Ascending aorta (tissue), 2 donors: ENCODE measurements at regions of chr2 and their contacts with region 1.

Region 1: DNA sequence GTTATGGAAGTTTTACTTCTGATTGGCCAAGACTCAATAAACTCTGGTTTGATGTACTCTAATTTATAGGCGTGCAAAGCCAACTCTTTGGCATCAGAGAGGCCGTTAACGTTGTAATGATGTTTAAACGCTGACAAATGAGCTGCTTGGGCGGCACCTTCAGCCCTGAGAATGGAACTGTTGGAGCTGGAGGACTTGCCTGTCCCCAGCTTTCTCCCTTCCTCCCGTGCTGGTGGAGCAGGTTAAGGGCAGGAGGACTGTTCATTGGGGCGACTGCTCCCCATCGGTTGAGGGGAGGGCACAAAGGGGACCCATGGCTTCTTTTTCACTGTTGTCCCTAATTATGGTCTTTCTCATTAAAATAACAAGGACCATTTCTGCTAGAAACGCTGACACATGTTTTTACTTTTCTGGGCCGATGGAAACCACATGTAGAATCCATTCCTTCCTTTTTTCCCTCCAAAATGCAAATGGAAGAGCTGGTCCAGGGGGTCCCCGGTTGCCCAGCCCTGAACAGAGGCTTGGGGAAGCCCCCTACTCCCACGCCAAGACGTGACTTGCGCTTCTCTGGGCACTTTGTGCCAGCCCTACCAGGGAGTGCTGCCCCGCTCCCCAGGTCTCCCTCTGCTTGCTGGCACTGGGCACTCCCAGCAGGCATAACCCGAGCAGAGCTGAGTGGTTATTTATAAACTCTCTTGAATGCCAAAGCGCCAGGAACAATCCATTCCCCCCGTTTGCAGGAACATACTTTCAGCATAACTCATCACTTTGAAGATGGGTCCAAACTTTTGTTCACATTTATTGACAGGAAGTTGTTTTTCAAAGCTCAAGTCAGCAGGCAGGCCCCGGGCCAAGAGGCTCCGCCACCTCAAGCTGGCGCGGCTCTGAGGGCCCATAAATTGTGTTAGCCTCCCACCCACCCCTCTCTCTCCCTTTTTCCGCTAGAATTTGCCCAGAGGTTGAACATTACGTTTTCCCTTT is 170.1 kb downstream of the ASB1 start:
- DNase-seq: peak; percentile 40 to 90
- H3K4me3 ChIP-seq: no peak overlapping the region
- H3K27ac ChIP-seq: peak overlapping the region; percentile 89 to 95
- H3K4me1 ChIP-seq: peaks cover 9 to 28% of the 10 kb centered on the region in 2 donors
- H3K27me3 ChIP-seq: no peaks in the 10 kb centered on the region
- CTCF ChIP-seq: no peak

Region 2: GRCh38 chr2:237833546-237833945 is 763.3 kb before region 1 on chr2:
- intact Hi-C with region 1: no loop called
- DNase-seq: no peak
- H3K4me3 ChIP-seq: no peak overlapping the region
- H3K27ac ChIP-seq: no peak overlapping the region
- H3K4me1 ChIP-seq: no peaks in the 10 kb centered on the region
- H3K27me3 ChIP-seq: no peaks in the 10 kb centered on the region
- CTCF ChIP-seq: no peak

Region 3: DNA sequence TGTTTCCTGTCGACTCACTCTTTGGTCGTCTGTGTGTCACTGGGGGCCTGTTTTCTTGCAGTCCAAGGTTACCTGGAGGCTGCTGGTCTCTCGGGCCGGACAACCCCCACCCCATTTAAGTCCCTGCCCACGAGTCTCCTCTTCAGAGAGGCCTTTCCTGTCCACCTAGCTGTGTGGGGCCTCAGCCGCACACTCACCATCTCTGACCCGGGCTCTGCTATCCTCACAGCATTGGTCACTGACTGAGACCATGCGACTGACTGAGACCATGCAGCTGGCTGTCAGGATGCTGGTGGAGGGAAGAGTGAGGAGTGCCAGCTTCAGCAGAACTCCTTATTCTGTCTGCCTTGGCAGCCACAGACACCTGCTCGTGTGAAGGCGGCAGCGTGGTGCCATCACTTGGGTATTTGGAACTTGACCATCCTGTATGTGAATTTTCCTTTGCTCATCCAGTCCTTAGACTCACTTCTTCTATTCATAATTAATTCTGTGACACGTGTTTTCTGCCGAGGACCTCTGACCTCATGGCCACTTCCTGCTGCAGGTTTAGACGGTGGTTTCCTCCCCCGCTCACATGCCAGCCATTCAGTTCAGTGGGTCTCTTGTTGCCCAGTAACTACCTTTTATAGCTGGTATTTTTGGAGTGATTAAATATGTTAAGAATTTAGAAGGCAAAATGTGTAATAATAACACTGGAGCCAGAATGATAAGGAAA is 217.6 kb before region 1 on chr2:
- intact Hi-C with region 1: loop called (anchors 5 kb)
- DNase-seq: peak in 1 of 2 donors; percentile 79
- H3K4me3 ChIP-seq: no peak overlapping the region
- H3K27ac ChIP-seq: peak overlapping the region; percentile 55 to 84
- H3K4me1 ChIP-seq: peaks cover 12 to 28% of the 10 kb centered on the region in 2 donors
- H3K27me3 ChIP-seq: no peaks in the 10 kb centered on the region
- CTCF ChIP-seq: no peak

Region 4: DNA sequence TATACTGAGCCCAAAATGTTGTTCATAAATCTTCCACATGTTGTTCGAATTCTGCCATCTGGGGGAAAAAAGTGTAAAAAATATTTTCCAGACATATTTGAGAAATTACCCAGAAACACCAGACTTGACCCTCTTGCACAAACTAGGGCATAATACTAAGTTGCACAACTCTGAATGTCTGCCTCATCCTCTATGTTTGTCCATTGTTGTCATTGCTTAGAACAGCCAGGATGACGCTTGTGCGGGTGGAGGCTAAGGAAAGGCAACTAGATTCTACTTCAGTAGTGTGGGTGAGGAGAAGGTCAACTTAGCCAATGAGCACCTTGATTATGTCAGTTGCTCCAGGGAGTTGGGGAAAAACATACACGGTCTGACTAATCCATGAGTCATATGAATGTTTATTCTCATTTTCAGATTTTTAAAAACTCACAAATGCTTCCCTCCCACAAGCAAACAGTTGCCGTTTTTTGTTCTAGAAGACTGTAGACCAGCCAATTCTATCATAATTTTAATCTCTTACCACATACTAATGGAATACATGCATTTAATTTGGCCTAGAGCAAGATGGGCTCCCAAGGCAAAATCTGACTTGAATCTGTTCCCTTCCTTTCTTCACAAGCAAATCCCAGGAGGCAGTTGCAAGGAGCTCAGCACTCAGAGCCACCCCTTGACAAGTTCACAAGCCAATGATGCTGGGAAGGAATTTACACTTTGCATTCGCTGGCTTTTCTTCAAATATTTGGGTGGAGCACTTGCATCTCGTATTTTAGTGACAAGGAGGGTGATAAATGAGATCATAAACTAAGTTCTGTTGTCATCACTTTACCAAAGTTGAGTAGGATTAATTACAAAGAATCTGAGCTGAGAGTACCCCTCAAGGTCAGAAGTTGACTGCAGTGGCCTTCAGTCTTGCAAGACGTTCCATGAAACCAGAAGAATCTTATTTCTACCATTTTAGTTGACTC is 87.8 kb after region 1 on chr2:
- intact Hi-C with region 1: loop called (anchors 2 kb)
- DNase-seq: peak in 1 of 2 donors; percentile 87
- H3K4me3 ChIP-seq: no peak overlapping the region
- H3K27ac ChIP-seq: peak overlapping the region; percentile 73 to 77
- H3K4me1 ChIP-seq: peaks cover 0 to 11% of the 10 kb centered on the region in 2 donors
- H3K27me3 ChIP-seq: no peaks in the 10 kb centered on the region
- CTCF ChIP-seq: no peak

Region 5: GRCh38 chr2:238784671-238785527 is 188.0 kb after region 1 on chr2:
- intact Hi-C with region 1: loop called (anchors 5 kb)
- DNase-seq: peak in 1 of 2 donors; percentile 81
- H3K4me3 ChIP-seq: peak overlapping the region in 1 of 2 donors; percentile 38
- H3K27ac ChIP-seq: peak overlapping the region; percentile 1 to 62
- H3K4me1 ChIP-seq: no peaks in the 10 kb centered on the region
- H3K27me3 ChIP-seq: no peaks in the 10 kb centered on the region
- CTCF ChIP-seq: peak; percentile 82 to 89 (median 82)

Region 6: GRCh38 chr2:238864207-238865014 is 267.6 kb after region 1 on chr2:
- intact Hi-C with region 1: loop called (anchors 10 kb)
- DNase-seq: peak; percentile 79 to 96
- H3K4me3 ChIP-seq: peak overlapping the region; percentile 15 to 48
- H3K27ac ChIP-seq: peak overlapping the region; percentile 86 to 92
- H3K4me1 ChIP-seq: peaks cover 26 to 53% of the 10 kb centered on the region in 2 donors
- H3K27me3 ChIP-seq: no peaks in the 10 kb centered on the region
- CTCF ChIP-seq: no peak